Activated naive CD4-positive, alpha-beta T cell treated with anti-CD3 and anti-CD28 coated beads for 36 hours (primary cell): ENCODE measurements at regions of chr18 and their contacts with region 1.

Region 1: DNA sequence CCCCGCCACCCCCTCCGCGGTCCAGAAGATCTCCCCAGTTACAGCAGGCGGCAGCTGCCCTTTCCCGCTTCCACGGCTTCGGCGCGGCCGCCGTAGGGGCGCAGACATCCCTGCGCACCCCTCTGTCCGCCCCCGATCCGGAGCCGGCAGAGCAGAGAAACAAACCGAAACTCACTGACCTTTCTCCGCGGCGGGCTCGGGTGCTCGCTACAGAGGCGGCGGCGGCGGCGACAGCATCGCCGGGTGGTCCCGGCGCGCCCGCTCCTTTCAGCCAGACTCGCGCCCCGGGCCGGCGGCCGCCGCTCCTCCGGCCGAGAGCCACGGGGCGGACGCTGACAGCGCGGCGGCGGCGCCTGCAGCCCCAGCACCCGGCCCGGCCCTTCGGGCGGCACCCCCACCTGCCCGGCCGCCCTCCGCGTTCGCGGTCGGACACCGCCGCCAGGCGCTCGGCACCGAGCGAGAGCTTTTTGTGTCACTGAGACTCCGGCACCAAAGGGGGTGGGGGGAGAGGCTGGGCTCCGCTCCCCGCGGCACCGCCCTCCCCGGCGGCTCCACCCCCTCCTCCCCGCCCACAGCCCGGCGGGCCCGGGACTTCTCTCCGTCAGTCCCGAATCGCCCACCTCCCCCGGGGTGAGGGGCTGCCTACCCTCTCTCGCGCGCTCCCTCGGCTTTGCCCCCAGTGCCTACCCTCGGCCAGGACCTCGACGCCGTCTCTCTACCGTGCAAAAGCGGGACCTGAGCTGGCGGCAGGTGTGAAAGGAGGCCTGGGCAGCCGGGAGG is 1.4 kb upstream of the RNF152 start:
- DNase-seq: peak; percentile 81
- H3K4me3 Mint-ChIP-seq: peak overlapping the region; percentile 75
- H3K27ac Mint-ChIP-seq: no peak overlapping the region
- H3K4me1 Mint-ChIP-seq: peaks cover 6% of the 10 kb centered on the region
- H3K27me3 Mint-ChIP-seq: peaks cover 28% of the 10 kb centered on the region

Region 2: DNA sequence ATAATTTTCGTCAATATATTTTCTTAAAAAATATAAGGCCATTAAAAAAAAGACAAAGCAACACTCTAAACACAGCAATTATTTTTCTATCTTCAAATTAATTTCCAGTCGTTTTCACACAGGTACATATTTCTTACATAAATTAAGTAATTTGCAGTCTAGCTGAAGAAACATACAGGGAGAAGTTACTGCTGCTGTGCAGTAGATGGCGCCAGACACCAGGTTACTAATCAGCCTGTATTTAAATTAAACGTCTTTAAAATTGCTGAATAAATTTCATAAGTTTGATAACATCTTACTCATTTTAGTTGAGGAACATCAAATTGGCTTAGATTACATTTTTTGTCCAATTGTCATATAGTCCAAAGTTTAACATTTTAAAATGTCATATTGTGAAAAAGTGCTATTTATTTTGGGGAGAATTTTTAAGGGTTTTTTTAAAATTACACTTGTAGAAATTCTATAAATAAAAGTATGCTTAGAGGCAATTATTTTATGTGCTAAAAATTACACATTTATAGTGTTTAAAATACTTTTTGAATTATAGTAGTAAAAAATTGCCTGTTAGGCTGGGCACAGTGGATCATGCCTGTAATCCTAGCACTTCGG is 1906.0 kb before region 1 on chr18:
- CTCF ChIA-PET with region 1: no interaction called
- intact Hi-C with region 1: loop called (anchors 10 kb)
- DNase-seq: peak; percentile 74
- H3K4me3 Mint-ChIP-seq: no peak overlapping the region
- H3K27ac Mint-ChIP-seq: no peak overlapping the region
- H3K4me1 Mint-ChIP-seq: no peaks in the 10 kb centered on the region
- H3K27me3 Mint-ChIP-seq: peaks cover 18% of the 10 kb centered on the region

Region 3: GRCh38 chr18:61551586-61551985 is 342.6 kb before region 1 on chr18:
- CTCF ChIA-PET with region 1: no interaction called
- intact Hi-C with region 1: loop called (anchors 1 kb)
- DNase-seq: peak; percentile 32
- H3K4me3 Mint-ChIP-seq: no peak overlapping the region
- H3K27ac Mint-ChIP-seq: no peak overlapping the region
- H3K4me1 Mint-ChIP-seq: peaks cover 7% of the 10 kb centered on the region
- H3K27me3 Mint-ChIP-seq: peaks cover 6% of the 10 kb centered on the region

Region 4: GRCh38 chr18:61581578-61582201 is 312.5 kb before region 1 on chr18:
- CTCF ChIA-PET with region 1: no interaction called
- intact Hi-C with region 1: loop called (anchors 2 kb)
- DNase-seq: peak; percentile 71
- H3K4me3 Mint-ChIP-seq: no peak overlapping the region
- H3K27ac Mint-ChIP-seq: no peak overlapping the region
- H3K4me1 Mint-ChIP-seq: peaks cover 8% of the 10 kb centered on the region
- H3K27me3 Mint-ChIP-seq: peaks cover 38% of the 10 kb centered on the region

Region 5: DNA sequence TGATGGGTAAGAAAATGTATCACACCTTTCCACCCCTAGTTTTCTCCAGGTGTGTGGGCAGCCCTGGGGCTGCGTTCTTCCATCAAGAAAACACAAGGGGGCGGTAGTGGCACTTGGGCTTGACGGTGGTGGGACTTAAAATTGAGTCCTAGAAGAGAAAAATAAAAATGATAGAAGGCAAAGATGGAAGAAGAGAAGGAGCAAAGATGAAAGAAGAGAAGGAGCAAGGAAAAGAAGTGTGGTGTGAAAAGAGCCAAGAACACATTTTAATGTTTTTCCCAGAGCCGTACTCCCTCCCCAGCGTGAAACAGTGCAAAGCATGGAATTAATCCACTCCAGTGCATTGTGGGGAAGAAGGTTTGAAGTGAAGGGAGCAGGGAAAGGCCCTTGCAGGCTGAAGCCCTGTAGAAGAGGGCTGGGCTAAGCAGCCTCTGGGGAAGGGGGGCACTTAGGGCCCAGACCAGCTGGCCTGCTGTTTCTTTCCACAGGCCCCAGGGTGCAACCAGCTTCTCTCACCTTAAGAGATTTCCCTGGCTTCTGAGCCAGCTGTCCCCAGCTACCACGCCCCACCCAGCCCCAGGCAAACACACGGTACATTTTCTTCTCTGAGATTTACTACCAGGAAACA is 258.1 kb before region 1 on chr18:
- CTCF ChIA-PET with region 1: interaction called, 6 read pairs
- intact Hi-C with region 1: loop called (anchors 1 kb)
- DNase-seq: peak; percentile 59
- H3K4me3 Mint-ChIP-seq: no peak overlapping the region
- H3K27ac Mint-ChIP-seq: no peak overlapping the region
- H3K4me1 Mint-ChIP-seq: no peaks in the 10 kb centered on the region
- H3K27me3 Mint-ChIP-seq: peaks cover 11% of the 10 kb centered on the region

Region 6: DNA sequence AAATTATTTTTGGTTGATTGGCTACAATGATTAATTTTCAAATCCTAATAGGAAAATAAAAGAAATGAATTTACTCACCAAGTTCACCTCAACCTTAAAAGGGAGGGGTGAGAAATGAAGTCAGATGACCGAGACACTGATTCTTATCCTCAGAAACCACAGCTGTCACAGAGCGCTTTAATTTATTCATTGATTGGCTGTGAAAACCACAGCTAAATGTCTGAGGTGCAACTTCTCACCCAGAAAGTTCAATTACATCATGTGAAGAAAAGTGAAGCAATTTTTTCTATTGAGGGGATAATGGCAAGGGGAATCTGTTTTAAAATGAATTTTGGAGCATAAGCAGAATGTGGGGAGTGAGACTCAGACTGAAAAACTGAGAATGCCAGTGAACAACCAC is 129.8 kb before region 1 on chr18:
- CTCF ChIA-PET with region 1: no interaction called
- intact Hi-C with region 1: loop called (anchors 5 kb)
- DNase-seq: no peak
- H3K4me3 Mint-ChIP-seq: no peak overlapping the region
- H3K27ac Mint-ChIP-seq: no peak overlapping the region
- H3K4me1 Mint-ChIP-seq: peaks cover 12% of the 10 kb centered on the region
- H3K27me3 Mint-ChIP-seq: peaks cover 9% of the 10 kb centered on the region

Region 7: DNA sequence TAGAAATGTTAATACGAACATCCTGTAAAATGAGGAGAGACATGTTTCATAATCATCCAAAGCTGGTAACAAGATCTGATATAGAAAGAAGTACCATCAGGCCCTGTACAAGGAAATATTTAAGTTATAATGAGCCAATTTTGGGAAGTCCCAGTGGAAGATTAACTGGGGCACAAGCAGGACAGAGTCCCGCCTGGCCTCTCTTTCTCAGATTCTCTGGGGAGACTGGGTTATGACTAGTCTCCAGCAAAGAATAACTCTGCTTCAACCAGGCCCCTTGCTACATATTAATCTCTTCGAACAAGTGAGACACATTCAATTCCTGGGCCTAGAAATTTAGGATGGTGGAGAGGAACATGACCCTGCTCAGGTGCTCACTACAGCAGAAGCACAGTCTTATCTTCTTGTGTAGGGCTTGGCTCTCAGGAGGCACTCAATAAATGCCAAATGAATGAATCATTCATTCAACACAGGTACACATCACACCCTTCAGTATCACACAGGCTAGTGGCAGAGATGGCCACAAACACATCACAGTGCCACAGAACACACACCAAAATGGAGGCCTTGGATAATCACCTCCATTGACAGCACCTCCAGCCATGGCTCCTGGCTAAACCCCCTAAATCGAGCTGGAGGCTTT is 45.0 kb after region 1 on chr18:
- CTCF ChIA-PET with region 1: no interaction called
- intact Hi-C with region 1: no loop called
- DNase-seq: no peak
- H3K4me3 Mint-ChIP-seq: no peak overlapping the region
- H3K27ac Mint-ChIP-seq: no peak overlapping the region
- H3K4me1 Mint-ChIP-seq: peaks cover 10% of the 10 kb centered on the region
- H3K27me3 Mint-ChIP-seq: peaks cover 8% of the 10 kb centered on the region

Region 8: DNA sequence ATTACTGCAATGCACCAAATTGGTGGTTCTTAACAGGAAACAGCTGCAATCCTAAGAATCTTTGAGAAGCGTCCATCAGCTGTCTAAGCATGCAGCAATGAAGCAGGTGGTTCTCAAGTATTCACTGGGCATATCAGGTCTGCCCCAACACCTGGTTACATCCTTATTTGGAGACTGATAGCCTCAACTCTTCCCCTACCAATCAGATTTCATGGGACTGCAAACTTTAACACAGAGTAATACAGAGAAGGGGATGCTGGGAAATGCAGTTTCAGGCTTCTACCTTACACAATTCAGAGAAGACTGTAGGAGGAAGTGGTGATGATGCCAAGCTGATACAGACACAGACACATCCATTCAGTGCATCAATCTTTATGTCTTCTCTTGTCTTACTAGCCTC is 1185.0 kb after region 1 on chr18:
- CTCF ChIA-PET with region 1: no interaction called
- intact Hi-C with region 1: no loop called
- DNase-seq: no peak
- H3K4me3 Mint-ChIP-seq: no peak overlapping the region
- H3K27ac Mint-ChIP-seq: no peak overlapping the region
- H3K4me1 Mint-ChIP-seq: peaks cover 9% of the 10 kb centered on the region
- H3K27me3 Mint-ChIP-seq: peaks cover 2% of the 10 kb centered on the region

Region 9: DNA sequence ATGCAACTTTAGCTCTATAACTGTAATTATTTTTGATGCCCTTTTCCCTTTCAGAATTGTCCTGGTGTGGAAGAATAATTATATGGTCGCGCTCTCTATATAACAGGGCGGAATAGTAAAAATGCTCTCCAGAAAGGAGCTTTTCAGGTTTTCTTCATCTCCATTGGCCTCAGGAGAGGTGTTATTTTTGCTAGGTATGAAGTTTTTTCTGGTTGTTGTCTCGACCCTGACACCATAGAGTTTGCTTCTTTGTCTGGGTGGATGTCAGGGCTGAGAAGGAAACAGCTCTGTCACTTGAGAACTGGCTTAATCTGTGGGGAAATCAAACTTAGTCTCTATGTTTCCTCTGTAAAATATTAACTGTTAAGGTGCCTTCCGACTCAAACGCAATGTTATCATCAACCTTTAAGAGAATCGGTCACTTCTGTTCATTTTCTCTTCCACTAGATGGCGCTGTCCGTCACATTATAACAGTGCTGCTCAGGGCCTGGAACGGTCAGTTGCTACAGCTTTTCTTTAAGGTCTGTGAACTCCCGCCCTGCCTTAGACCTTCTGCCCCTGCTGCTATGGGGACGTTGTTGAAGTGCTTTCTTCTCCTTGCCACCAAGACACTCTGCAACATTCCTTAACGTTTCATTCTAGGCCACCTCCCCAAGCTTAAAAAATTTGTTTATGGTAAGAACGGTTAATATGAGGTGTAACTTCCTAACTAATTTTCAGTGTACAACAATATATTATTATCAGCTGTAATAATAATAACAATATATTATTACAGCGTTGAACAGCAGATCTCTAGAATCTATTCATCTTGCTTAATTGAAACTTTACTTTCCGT is 1624.2 kb after region 1 on chr18:
- CTCF ChIA-PET with region 1: no interaction called
- intact Hi-C with region 1: no loop called
- DNase-seq: peak; percentile 79
- H3K4me3 Mint-ChIP-seq: no peak overlapping the region
- H3K27ac Mint-ChIP-seq: no peak overlapping the region
- H3K4me1 Mint-ChIP-seq: no peaks in the 10 kb centered on the region
- H3K27me3 Mint-ChIP-seq: peaks cover 8% of the 10 kb centered on the region